ENCODE measurements at regions of chr7 and their contacts with region 1.

Region 1: DNA sequence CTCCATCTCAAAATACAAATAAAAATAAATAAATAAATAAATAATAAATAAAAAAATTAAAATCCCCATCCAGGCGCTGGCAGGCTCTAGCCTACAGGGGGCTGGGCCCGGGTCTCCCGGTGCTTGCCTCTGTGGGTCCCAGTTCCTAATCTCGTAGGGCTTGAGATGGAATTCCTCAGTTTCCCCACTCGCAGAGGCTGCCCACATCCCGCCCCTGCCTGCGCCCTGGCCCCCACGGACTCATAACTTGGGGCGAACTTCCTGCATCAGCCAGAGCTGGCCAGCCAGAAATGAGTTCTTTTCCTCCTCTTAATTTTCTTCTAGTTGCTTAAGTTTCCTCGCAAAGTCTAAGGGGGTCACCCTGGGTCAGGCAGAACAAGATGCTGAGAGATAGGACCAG is 22.0 kb upstream of the SRRM3 start:
- DNase-seq: no peak
- ATAC-seq: no peak
- H3K4me3 ChIP-seq: no peak overlapping the region
- H3K27ac ChIP-seq: no peak overlapping the region
- H3K4me1 ChIP-seq: no peaks in the 10 kb centered on the region
- CTCF ChIP-seq: no peak
- EP300 ChIP-seq: no peak
- POLR2A ChIP-seq: no peak
- RAD21 ChIP-seq: no peak

Region 2: GRCh38 chr7:76166404-76167255 is 13.1 kb before region 1 on chr7:
- CTCF ChIA-PET with region 1: interaction called, 37 read pairs
- POLR2A ChIA-PET with region 1: no interaction called
- DNase-seq: peak; percentile 94 to 98
- ATAC-seq: peak; percentile 95 to 97
- H3K4me3 ChIP-seq: peak overlapping the region; percentile 62
- H3K27ac ChIP-seq: peak overlapping the region; percentile 73 to 90
- H3K4me1 ChIP-seq: 0 out of 3 replicates have a peak, but pooled peaks cover 4% of the 10 kb centered on the region
- CTCF ChIP-seq: no peak
- EP300 ChIP-seq: no peak
- POLR2A ChIP-seq: peak; percentile 92
- RAD21 ChIP-seq: 0 out of 5 replicates have a peak, but pooled peaks have one; percentile 10 to 22

Region 3: DNA sequence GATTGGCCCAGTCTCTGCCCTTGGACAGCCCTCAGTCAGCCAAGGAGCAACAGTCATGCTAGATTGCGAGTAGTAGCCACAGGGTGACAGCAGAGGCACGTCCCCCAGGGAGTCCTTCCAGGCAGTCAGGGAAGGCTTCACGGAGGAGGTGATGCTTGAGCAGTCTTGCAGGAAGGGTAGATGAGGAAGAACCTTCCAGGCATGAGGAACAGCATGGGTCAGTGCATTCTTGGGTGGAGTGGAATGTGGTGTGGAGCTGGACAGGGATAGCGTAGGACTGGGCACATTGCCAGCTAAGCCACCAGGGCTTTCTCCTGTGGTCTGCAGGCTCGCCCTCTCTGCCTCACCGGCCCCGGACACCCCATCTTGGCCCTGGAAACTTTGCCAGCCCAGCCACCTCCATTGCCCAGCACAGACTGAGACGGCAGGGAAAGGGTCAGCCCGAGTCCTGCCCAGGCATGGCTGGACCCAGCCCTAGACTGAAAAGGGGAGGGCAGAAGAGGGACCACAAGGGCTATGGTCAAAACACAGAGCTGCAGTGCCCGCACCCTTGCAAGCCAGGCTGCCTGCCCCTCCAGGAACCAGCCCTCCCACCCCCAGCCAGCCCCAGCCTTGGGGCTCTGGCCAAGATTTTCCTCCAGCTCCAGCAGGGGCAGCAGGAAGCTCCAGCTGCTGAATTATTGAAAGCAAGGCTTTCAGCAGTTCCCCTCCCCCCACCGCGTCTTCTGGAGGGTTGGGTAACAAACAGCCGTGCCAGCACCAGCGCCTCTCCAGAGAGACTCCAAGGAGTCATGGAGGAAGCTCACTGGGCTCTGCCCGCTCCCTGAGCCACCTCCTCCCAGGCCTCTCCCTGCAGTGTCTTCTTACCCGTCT is 40.7 kb after region 1 on chr7:
- CTCF ChIA-PET with region 1: interaction called, 25 read pairs
- POLR2A ChIA-PET with region 1: no interaction called
- DNase-seq: peak in 1 of 2 experiments; percentile 73
- ATAC-seq: peak; percentile 63 to 69
- H3K4me3 ChIP-seq: no peak overlapping the region
- H3K27ac ChIP-seq: peak overlapping the region in 1 of 2 experiments; percentile 35; a peak in 3 of 6 replicates
- H3K4me1 ChIP-seq: peaks cover 12% of the 10 kb centered on the region
- CTCF ChIP-seq: no peak; the same call in 2 of the 3 replicates
- EP300 ChIP-seq: no peak
- POLR2A ChIP-seq: no peak
- RAD21 ChIP-seq: peak; percentile 31 to 56; a peak in 3 of 5 replicates

Region 4: GRCh38 chr7:76254781-76255180 is 75.1 kb after region 1 on chr7:
- CTCF ChIA-PET with region 1: interaction called, 127 read pairs
- POLR2A ChIA-PET with region 1: no interaction called
- DNase-seq: no peak
- ATAC-seq: no peak
- H3K4me3 ChIP-seq: no peak overlapping the region
- H3K27ac ChIP-seq: no peak overlapping the region
- H3K4me1 ChIP-seq: peaks cover 10% of the 10 kb centered on the region; the same call in 2 of the 3 replicates
- CTCF ChIP-seq: no peak
- EP300 ChIP-seq: no peak
- POLR2A ChIP-seq: no peak
- RAD21 ChIP-seq: no peak

Region 5: GRCh38 chr7:76282344-76283253 is 102.9 kb after region 1 on chr7:
- CTCF ChIA-PET with region 1: interaction called, 71 read pairs
- POLR2A ChIA-PET with region 1: no interaction called
- DNase-seq: no peak
- ATAC-seq: peak; percentile 47 to 65
- H3K4me3 ChIP-seq: peak overlapping the region; percentile 78
- H3K27ac ChIP-seq: peak overlapping the region; percentile 84
- H3K4me1 ChIP-seq: peaks cover 19% of the 10 kb centered on the region
- CTCF ChIP-seq: no peak
- EP300 ChIP-seq: no peak
- POLR2A ChIP-seq: no peak
- RAD21 ChIP-seq: no peak

Region 6: GRCh38 chr7:76314042-76314721 is 134.5 kb after region 1 on chr7:
- CTCF ChIA-PET with region 1: interaction called, 212 read pairs
- POLR2A ChIA-PET with region 1: interaction called, 4 read pairs
- DNase-seq: peak; percentile 92 to 95
- ATAC-seq: peak; percentile 40 to 67
- H3K4me3 ChIP-seq: no peak overlapping the region
- H3K27ac ChIP-seq: peak overlapping the region; percentile 76 to 83
- H3K4me1 ChIP-seq: peaks cover 27% of the 10 kb centered on the region
- CTCF ChIP-seq: peak; percentile 100
- EP300 ChIP-seq: no peak
- POLR2A ChIP-seq: no peak
- RAD21 ChIP-seq: peak; percentile 100

Measured in A549 (cell line).